CD8-positive, alpha-beta T cell (primary cell): ENCODE measurements at regions of chr17 and their contacts with region 1.

Region 1: GRCh38 chr17:48636177-48637018 is 10.2 kb upstream of the HOXB9 start:
- DNase-seq: peak; percentile 36 to 79 (median 70)
- ATAC-seq: peak; percentile 88
- H3K4me3 ChIP-seq: peak overlapping the region in 1 of 2 experiments; percentile 22
- H3K4me3 Mint-ChIP-seq: peak overlapping the region; percentile 3
- H3K27ac ChIP-seq: no peak overlapping the region
- H3K27ac Mint-ChIP-seq: no peak overlapping the region
- H3K4me1 ChIP-seq: peaks cover 15% of the 10 kb centered on the region
- H3K4me1 Mint-ChIP-seq: peaks cover 14% of the 10 kb centered on the region
- H3K27me3 ChIP-seq: peaks cover 27 to 47% of the 10 kb centered on the region in 2 experiments
- H3K27me3 Mint-ChIP-seq: peaks cover 82% of the 10 kb centered on the region
- CTCF ChIP-seq: peak; percentile 72

Region 2: DNA sequence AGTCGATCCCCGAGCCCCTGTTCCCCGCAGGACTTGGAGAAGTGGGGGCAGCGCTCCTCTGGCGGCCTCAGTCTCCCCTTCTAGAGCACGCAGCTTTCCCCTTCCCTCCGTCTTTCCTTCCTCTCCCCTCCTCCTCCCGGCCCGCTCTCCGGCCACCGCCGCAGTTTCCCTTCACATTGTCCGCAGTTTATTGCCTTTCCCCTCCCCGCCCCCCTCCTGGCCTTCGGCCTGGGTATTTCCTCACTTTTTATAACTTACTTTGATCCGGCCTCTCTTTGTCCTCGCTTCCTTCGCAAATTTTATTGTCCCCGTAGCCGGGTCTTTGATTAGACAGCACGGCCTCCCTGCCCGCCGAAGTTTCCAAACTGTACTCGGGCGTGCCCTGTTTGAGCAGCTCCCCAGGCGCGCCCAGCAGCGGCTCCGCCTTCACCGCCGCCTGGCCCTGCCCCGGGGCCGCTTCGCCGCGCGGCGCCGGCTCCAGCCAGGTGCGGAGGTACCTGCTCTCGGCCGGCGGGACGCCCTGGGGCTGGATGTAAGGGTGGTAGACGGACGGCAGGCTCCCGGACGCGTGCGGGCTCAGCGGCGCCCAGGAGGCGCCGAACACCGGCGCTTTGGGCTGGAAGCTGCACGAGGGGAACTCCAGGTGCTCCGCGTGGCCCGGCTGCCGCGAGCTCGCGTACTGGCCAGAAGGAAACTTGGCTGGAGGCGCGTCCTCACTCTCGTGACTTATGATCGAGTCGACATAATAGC is 10.7 kb before region 1 on chr17:
- CTCF ChIA-PET with region 1: interaction called, 10 read pairs
- POLR2A ChIA-PET with region 1: no interaction called
- intact Hi-C with region 1: no loop called
- DNase-seq: peak in 5 of 9 experiments; percentile 29 to 73 (median 39)
- ATAC-seq: peak; percentile 56
- H3K4me3 ChIP-seq: peak overlapping the region; percentile 45 to 55
- H3K4me3 Mint-ChIP-seq: peak overlapping the region; percentile 83
- H3K27ac ChIP-seq: no peak overlapping the region
- H3K27ac Mint-ChIP-seq: peak overlapping the region; percentile 18
- H3K4me1 ChIP-seq: peaks cover 26% of the 10 kb centered on the region
- H3K4me1 Mint-ChIP-seq: peaks cover 11% of the 10 kb centered on the region
- H3K27me3 ChIP-seq: peaks cover 39 to 45% of the 10 kb centered on the region in 2 experiments
- H3K27me3 Mint-ChIP-seq: peaks cover 86% of the 10 kb centered on the region
- CTCF ChIP-seq: no peak

Region 3: GRCh38 chr17:48647103-48647962 is 10.9 kb after region 1 on chr17:
- CTCF ChIA-PET with region 1: interaction called, 12 read pairs
- POLR2A ChIA-PET with region 1: no interaction called
- intact Hi-C with region 1: no loop called
- DNase-seq: peak in 1 of 9 experiments; percentile 48
- ATAC-seq: no peak
- H3K4me3 ChIP-seq: peak overlapping the region; percentile 56 to 77
- H3K4me3 Mint-ChIP-seq: peak overlapping the region; percentile 86
- H3K27ac ChIP-seq: peak overlapping the region in 1 of 2 experiments; percentile 67
- H3K27ac Mint-ChIP-seq: no peak overlapping the region
- H3K4me1 ChIP-seq: peaks cover 9% of the 10 kb centered on the region
- H3K4me1 Mint-ChIP-seq: peaks cover 18% of the 10 kb centered on the region
- H3K27me3 ChIP-seq: peaks cover 15 to 26% of the 10 kb centered on the region in 2 experiments
- H3K27me3 Mint-ChIP-seq: peaks cover 46% of the 10 kb centered on the region
- CTCF ChIP-seq: no peak